B cell (primary cell): ENCODE measurements at regions of chr6 and their contacts with region 1.

Region 1: GRCh38 chr6:85449818-85450759 is at the start of gene NT5E:
- DNase-seq: peak; percentile 49
- ATAC-seq: peak; percentile 79
- H3K4me3 ChIP-seq: peak within 1 kb of the TSS; percentile 34 to 83 (median 65)
- H3K4me3 Mint-ChIP-seq: peak within 1 kb of the TSS; percentile 91
- H3K27ac ChIP-seq: peak within 1 kb of the TSS; percentile 72 to 86
- H3K27ac Mint-ChIP-seq: peak within 1 kb of the TSS; percentile 90
- H3K4me1 ChIP-seq: peaks cover 30 to 53% of the 10 kb centered on the region in 2 donors
- H3K4me1 Mint-ChIP-seq: peaks cover 60% of the 10 kb centered on the region
- H3K27me3 ChIP-seq: peaks cover 0 to 27% (median 4%) of the 10 kb centered on the region in 4 experiments
- H3K27me3 Mint-ChIP-seq: peaks cover 12% of the 10 kb centered on the region
- CTCF ChIP-seq: no peak
- total RNA-seq, gene NT5E: 23.2 and 24.8 TPM in 2 replicates

Region 2: DNA sequence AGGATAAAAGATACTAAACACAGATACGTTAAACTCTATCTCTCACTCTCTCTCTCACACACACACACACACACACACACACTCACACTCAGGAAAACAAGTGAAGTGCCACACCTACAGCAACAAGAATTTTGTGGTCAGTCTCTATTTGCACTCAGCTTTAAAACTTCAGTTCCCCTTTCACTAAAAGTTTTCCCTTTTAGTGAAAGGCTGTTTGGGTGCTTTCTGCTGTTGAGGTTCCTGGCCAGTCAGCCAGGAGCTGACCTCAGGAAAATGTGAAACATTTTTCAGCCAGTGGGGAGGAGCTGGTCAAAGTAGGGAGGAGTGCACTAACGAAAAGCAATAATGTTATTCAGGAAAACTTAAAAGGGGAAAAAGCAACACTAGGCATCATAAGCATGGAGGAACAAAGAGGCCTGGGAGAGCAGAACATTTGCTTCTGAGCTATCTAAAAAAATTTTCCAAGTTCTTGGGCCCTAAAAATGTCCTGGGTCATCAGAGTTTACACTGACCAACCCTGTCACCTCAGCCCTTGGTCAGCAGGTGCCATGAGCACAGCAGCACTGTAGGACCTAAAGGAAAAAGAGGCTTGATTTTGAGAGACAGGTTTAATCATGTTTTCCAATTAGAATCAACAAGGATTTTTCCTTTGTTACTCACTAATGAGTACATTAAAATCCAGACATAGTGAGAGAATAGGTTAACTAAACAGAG is 30.9 kb before region 1 on chr6:
- CTCF ChIA-PET with region 1: interaction called, 6 read pairs
- POLR2A ChIA-PET with region 1: interaction called, 5 read pairs
- intact Hi-C with region 1: loop called (anchors 1 kb)
- DNase-seq: peak; percentile 23
- ATAC-seq: peak; percentile 75
- H3K4me3 ChIP-seq: no peak overlapping the region
- H3K4me3 Mint-ChIP-seq: peak overlapping the region; percentile 76
- H3K27ac ChIP-seq: peak overlapping the region; percentile 30 to 60
- H3K27ac Mint-ChIP-seq: peak overlapping the region; percentile 96
- H3K4me1 ChIP-seq: peaks cover 22 to 23% of the 10 kb centered on the region in 2 donors
- H3K4me1 Mint-ChIP-seq: peaks cover 40% of the 10 kb centered on the region
- H3K27me3 ChIP-seq: no peaks in the 10 kb centered on the region
- H3K27me3 Mint-ChIP-seq: peaks cover 9% of the 10 kb centered on the region
- CTCF ChIP-seq: no peak

Region 3: DNA sequence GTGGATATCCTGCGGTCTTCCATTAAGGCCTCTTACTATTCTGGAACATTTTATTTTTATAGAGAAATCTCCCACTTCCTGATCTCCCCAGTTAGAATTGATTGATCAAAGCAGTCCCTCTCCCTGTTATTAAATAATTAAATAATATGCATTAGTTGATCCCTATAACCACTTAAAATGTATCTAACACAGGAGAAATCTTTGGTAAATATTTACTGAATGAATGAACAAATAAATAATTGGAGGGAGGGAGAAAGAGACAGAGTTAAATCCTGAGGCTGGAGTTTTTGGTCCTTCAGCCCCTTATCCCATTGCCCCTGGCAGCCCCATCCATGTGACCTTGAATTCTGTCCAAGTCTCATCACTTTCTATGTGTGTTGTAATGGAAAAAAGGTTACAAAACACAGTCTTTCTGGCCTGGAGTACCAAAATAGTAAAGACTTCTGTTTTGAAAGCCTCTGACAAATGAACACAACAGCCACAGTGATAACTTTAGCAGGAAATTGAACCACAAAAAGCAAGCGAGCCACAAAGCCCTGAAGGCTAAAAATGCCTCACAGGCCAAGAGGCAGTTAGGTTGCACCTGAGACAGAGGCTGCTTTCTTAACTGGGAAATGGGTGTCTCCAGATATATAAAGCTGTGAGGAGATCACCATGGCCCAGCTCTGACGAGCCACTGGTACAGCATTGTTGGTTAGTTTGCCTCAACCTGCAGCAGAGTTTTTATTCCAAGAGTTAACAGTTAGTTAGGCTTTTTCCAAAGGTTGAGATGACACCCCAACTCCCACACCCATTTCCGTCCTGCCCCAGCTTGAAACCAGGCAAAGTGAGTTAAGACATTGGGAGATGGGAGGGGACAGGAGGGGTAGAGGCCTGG is 11.1 kb after region 1 on chr6:
- CTCF ChIA-PET with region 1: interaction called, 30 read pairs
- POLR2A ChIA-PET with region 1: interaction called, 6 read pairs
- intact Hi-C with region 1: loop called (anchors 1 kb)
- DNase-seq: no peak
- ATAC-seq: peak; percentile 61
- H3K4me3 ChIP-seq: no peak overlapping the region
- H3K4me3 Mint-ChIP-seq: peak overlapping the region; percentile 51
- H3K27ac ChIP-seq: peak overlapping the region; percentile 72 to 74
- H3K27ac Mint-ChIP-seq: peak overlapping the region; percentile 93
- H3K4me1 ChIP-seq: peaks cover 48 to 75% of the 10 kb centered on the region in 2 donors
- H3K4me1 Mint-ChIP-seq: peaks cover 91% of the 10 kb centered on the region
- H3K27me3 ChIP-seq: peaks cover 0 to 3% (median 0%) of the 10 kb centered on the region in 4 experiments
- H3K27me3 Mint-ChIP-seq: peaks cover 2% of the 10 kb centered on the region
- CTCF ChIP-seq: no peak

Region 4: DNA sequence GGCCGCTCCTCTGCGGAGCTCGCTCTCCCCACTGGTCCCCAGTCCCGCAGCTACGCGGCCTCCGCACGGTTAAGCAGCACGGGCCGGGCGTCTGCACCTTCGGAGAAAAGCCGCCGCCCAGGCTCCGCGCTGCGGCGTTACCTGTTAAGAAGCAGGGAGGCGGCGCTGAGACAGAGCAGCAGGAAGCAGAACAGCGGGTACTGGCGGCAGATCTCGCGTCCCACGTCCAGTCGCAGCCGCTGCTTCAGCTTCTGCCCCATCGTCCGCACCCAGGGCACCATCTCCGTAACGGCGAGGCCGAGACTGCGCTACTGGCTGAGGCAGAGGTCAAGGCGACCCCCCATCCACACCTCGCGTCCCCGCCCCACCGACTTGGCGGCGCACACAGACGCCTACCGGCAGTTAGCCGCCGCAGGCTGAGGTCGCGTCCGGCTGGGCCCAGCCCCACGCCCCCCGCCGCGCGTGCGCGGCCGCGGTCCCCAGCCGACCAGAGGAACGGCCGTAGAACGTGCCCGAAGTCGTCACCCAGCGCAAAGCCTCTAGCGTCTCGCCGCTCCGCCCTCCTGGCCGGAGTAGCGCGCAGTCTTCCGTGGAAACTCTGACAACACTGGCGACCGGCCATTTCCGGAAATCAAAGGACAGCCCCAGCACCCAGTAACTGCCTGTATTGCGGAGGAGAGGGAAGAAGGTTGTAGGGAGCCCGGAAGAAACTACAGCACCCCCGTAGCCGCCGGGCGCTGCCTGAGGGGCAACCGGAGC is 143.5 kb after region 1 on chr6 and contains the start of gene SNX14:
- CTCF ChIA-PET with region 1: interaction called, 3 read pairs
- POLR2A ChIA-PET with region 1: interaction called, 4 read pairs
- intact Hi-C with region 1: loop called (anchors 5 kb)
- DNase-seq: peak; percentile 90
- ATAC-seq: peak; percentile 83
- H3K4me3 ChIP-seq: peak within 1 kb of the TSS; percentile 67 to 89 (median 79)
- H3K4me3 Mint-ChIP-seq: peak within 1 kb of the TSS; percentile 100
- H3K27ac ChIP-seq: peak within 1 kb of the TSS; percentile 59 to 73
- H3K27ac Mint-ChIP-seq: peak within 1 kb of the TSS; percentile 99
- H3K4me1 ChIP-seq: peaks cover 13 to 19% of the 10 kb centered on the region in 2 donors
- H3K4me1 Mint-ChIP-seq: peaks cover 39% of the 10 kb centered on the region
- H3K27me3 ChIP-seq: no peaks in the 10 kb centered on the region
- H3K27me3 Mint-ChIP-seq: no peaks in the 10 kb centered on the region
- CTCF ChIP-seq: no peak
- total RNA-seq, gene SNX14: 80.0 and 95.1 TPM in 2 replicates

Region 5: GRCh38 chr6:85642774-85643536 is 192.9 kb after region 1 on chr6 and contains the start of gene SYNCRIP:
- CTCF ChIA-PET with region 1: no interaction called
- POLR2A ChIA-PET with region 1: interaction called, 6 read pairs
- intact Hi-C with region 1: loop called (anchors 1 kb)
- DNase-seq: peak; percentile 98
- ATAC-seq: peak; percentile 80
- H3K4me3 ChIP-seq: peak within 1 kb of the TSS; percentile 79 to 100 (median 82)
- H3K4me3 Mint-ChIP-seq: peak within 1 kb of the TSS; percentile 92
- H3K27ac ChIP-seq: peak within 1 kb of the TSS; percentile 97 to 98
- H3K27ac Mint-ChIP-seq: peak within 1 kb of the TSS; percentile 99
- H3K4me1 ChIP-seq: peaks cover 20 to 27% of the 10 kb centered on the region in 2 donors
- H3K4me1 Mint-ChIP-seq: peaks cover 43% of the 10 kb centered on the region
- H3K27me3 ChIP-seq: no peaks in the 10 kb centered on the region
- H3K27me3 Mint-ChIP-seq: no peaks in the 10 kb centered on the region
- CTCF ChIP-seq: no peak
- total RNA-seq, gene SYNCRIP: 88.5 and 98.3 TPM in 2 replicates

Region 6: DNA sequence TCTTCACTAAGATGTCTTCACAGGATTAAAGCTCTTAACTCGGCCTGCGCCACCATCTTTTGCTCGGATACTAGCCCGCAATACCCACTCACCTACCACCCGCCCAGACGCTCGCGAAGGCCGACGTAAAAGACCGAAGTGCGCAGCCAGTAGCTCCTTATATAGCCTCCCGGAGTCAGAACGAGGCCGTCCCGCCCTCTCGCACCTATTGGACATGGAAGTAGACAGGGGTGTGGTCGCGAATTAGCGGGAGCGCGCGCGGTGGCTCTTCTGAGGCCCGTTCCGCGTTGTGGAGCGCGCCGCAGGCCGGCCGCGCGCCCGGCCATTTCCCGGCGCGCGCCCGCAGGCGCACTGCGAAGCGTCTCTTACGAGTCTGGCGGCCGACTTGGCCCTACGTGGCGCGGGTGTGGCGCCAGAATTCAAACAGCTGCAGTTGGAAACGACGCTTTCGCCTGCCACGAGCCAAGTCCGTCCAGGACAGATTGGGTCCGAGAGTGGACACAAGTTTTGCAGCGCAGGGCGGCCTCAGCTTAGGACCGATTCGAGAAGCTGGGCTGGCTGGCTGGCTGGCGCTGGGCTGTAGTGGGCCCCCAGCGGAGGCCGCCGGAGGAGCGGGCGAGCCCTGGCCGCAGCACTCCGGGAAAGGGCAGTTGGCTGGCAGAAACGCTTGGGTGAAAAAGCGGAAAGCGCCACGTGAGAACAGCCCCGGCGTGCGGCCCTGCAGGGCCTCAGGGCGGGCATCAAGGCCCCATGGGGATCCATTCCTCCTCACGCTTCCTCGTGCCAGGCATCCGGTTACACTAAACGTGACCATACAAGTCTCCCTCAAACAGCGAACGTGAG is 228.7 kb after region 1 on chr6:
- CTCF ChIA-PET with region 1: interaction called, 3 read pairs
- POLR2A ChIA-PET with region 1: interaction called, 5 read pairs
- intact Hi-C with region 1: loop called (anchors 10 kb)
- DNase-seq: peak; percentile 100
- ATAC-seq: peak; percentile 90
- H3K4me3 ChIP-seq: peak overlapping the region; percentile 74 to 98 (median 91)
- H3K4me3 Mint-ChIP-seq: peak overlapping the region; percentile 92
- H3K27ac ChIP-seq: peak overlapping the region; percentile 86 to 89
- H3K27ac Mint-ChIP-seq: peak overlapping the region; percentile 95
- H3K4me1 ChIP-seq: peaks cover 25 to 36% of the 10 kb centered on the region in 2 donors
- H3K4me1 Mint-ChIP-seq: peaks cover 46% of the 10 kb centered on the region
- H3K27me3 ChIP-seq: no peaks in the 10 kb centered on the region
- H3K27me3 Mint-ChIP-seq: no peaks in the 10 kb centered on the region
- CTCF ChIP-seq: no peak